ENCODE measurements at regions of chr13 and their contacts with region 1.

Region 1: DNA sequence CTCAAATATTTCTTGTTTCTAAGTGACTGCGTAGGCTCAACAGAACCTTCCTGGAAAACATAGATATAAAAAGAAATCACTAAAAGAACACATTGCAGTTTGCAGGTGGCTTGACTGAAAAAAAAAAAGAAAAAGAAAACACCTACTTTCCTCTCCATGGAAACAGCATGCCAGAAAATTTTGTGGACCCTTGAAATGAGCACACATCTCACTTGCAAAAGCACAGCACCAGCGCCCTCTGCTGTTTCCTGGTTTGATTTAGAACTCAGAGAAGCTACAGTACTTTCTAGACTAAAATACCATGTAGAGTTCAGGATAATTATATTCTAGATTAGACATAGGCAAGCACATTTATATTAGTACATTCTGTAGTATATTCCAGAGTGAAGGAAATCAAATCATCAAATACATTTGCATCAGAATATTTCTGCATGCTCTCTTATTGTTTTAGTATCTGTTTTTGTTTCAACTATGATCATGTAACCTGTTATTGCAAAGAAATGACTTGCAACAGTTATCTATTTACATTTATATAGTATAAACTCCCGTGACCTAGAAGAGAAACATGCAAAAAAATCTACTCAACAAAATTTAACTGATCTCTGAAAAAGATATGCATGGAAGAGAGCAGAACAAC is 22.3 kb upstream of the XPO4 start:
- DNase-seq: peak; percentile 84
- H3K4me3 ChIP-seq: no peak overlapping the region
- H3K27ac ChIP-seq: no peak overlapping the region
- H3K4me1 ChIP-seq: no peaks in the 10 kb centered on the region
- H3K27me3 ChIP-seq: no peaks in the 10 kb centered on the region
- CTCF ChIP-seq: peak; percentile 61

Region 2: DNA sequence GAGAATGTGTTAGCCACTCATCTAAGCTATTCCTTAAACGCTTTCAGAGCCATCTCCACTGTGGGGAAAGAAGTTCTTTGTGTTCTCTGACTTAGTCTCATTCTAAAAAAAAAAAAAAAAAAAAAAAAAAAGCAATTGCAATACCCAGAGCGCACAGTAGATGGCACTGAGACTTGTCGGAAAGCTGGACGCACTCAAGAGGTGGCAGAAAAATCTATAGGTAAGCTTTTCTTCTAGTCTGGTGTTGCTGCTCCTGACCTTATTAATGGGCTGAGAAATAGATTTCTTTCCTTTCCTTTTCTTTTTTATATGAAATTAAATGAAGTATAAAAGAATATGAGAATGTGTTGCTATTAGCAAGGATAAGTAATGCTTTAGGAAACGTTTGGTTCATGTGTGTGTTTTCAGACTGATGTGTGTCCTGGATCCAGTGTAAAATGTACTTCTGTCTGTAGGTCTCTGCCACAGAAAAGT is 727.5 kb before region 1 on chr13:
- intact Hi-C with region 1: loop called (anchors 10 kb)
- DNase-seq: no peak
- H3K4me3 ChIP-seq: no peak overlapping the region
- H3K27ac ChIP-seq: no peak overlapping the region
- H3K4me1 ChIP-seq: peaks cover 5% of the 10 kb centered on the region
- H3K27me3 ChIP-seq: peaks cover 34% of the 10 kb centered on the region
- CTCF ChIP-seq: peak; percentile 87

Region 3: DNA sequence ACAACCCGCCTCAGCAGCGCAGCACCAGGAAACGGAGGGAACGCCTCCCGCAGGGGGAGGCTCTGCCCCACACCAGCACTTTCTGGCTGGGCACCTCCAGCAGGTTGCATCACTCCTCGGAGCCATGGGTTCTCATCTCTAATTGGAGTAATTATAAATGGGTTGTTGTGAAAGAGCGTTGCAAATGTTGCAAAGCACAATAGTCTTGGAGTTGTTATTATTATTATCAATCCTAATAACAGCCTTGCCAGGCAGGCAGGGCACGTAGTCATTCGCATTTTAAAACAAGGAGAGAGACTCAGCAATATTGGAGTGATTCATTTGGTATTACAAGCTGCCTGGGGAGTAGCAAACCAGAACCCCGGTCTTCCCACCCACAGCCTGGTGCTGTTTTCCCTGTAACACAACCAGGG is 584.1 kb before region 1 on chr13:
- intact Hi-C with region 1: no loop called
- DNase-seq: no peak
- H3K4me3 ChIP-seq: no peak overlapping the region
- H3K27ac ChIP-seq: no peak overlapping the region
- H3K4me1 ChIP-seq: no peaks in the 10 kb centered on the region
- H3K27me3 ChIP-seq: no peaks in the 10 kb centered on the region
- CTCF ChIP-seq: no peak

Region 4: GRCh38 chr13:20616059-20616797 is 308.6 kb before region 1 on chr13:
- intact Hi-C with region 1: no loop called
- DNase-seq: no peak
- H3K4me3 ChIP-seq: no peak overlapping the region
- H3K27ac ChIP-seq: no peak overlapping the region
- H3K4me1 ChIP-seq: no peaks in the 10 kb centered on the region
- H3K27me3 ChIP-seq: no peaks in the 10 kb centered on the region
- CTCF ChIP-seq: no peak

Region 5: GRCh38 chr13:20713751-20714150 is 211.1 kb before region 1 on chr13:
- intact Hi-C with region 1: loop called (anchors 2 kb)
- DNase-seq: no peak
- H3K4me3 ChIP-seq: no peak overlapping the region
- H3K27ac ChIP-seq: no peak overlapping the region
- H3K4me1 ChIP-seq: no peaks in the 10 kb centered on the region
- H3K27me3 ChIP-seq: no peaks in the 10 kb centered on the region
- CTCF ChIP-seq: no peak

Region 6: DNA sequence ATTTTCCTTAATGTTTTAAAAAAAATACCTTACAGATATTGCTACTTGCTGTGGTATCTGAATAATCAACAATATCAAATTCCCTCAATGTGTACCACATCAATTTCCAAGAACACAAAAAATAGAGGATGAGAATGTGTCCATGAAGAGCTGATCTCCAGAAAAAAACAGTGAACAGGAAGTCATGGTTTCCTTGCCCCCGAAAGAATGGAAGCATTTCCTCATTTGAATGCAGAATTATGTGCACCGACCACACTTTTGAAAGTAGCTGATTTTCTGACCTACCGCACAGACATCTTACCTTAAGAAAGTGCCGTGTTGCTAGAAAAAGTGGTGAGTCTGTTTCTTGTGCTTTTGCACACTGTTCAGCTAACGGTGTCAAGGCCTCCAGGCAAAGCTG is 137.7 kb before region 1 on chr13:
- intact Hi-C with region 1: no loop called
- DNase-seq: no peak
- H3K4me3 ChIP-seq: no peak overlapping the region
- H3K27ac ChIP-seq: no peak overlapping the region
- H3K4me1 ChIP-seq: no peaks in the 10 kb centered on the region
- H3K27me3 ChIP-seq: no peaks in the 10 kb centered on the region
- CTCF ChIP-seq: no peak

Region 7: DNA sequence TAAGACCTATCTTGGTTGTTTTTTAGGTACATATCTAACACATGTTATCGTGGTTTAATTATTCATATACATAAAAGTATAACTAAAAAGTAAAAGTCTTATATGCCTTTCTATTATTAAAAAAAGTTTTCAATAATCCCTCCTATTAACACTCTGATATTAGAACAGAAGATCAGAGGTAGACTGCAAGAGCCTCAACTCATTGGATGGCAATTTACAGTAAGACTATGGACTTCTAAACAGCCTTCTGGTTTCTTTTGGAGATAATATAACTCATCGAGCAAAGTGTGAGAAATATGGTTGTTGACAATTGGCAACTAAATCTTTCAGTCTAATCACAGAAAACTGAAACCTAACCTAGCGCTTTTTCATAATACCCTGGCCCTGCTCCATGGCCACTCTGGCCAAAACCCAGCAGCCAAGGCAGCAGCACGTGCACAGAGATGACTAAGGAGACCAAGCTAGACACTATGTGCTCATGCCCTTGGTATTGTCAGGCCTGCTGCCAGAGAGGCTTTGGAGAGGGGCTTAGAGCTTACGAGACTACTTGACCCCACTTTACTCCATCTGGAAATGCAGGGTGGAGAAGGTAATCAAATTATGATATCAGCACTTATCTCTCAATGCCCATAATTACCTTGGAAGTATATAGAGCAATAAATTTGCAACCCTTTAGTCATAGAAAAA is 110.5 kb before region 1 on chr13:
- intact Hi-C with region 1: no loop called
- DNase-seq: peak; percentile 56
- H3K4me3 ChIP-seq: no peak overlapping the region
- H3K27ac ChIP-seq: no peak overlapping the region
- H3K4me1 ChIP-seq: no peaks in the 10 kb centered on the region
- H3K27me3 ChIP-seq: no peaks in the 10 kb centered on the region
- CTCF ChIP-seq: no peak

Region 8: GRCh38 chr13:20828539-20829364 is 96.1 kb before region 1 on chr13:
- intact Hi-C with region 1: loop called (anchors 5 kb)
- DNase-seq: peak; percentile 47
- H3K4me3 ChIP-seq: no peak overlapping the region
- H3K27ac ChIP-seq: no peak overlapping the region
- H3K4me1 ChIP-seq: no peaks in the 10 kb centered on the region
- H3K27me3 ChIP-seq: no peaks in the 10 kb centered on the region
- CTCF ChIP-seq: peak; percentile 81

Measured in colonic mucosa (tissue), 4 donors.